Left cardiac atrium (tissue), 4 donors: ENCODE measurements at regions of chr11 and their contacts with region 1.

Region 1: GRCh38 chr11:7577291-7578190 is 63.7 kb downstream of the PPFIBP2 start:
- DNase-seq: peak; percentile 37
- ATAC-seq: peak; percentile 56 to 62

Region 2: GRCh38 chr11:7442588-7443215 is 134.8 kb before region 1 on chr11:
- intact Hi-C with region 1: no loop called
- DNase-seq: peak; percentile 67
- ATAC-seq: peak in 1 of 2 donors; percentile 70

Region 3: DNA sequence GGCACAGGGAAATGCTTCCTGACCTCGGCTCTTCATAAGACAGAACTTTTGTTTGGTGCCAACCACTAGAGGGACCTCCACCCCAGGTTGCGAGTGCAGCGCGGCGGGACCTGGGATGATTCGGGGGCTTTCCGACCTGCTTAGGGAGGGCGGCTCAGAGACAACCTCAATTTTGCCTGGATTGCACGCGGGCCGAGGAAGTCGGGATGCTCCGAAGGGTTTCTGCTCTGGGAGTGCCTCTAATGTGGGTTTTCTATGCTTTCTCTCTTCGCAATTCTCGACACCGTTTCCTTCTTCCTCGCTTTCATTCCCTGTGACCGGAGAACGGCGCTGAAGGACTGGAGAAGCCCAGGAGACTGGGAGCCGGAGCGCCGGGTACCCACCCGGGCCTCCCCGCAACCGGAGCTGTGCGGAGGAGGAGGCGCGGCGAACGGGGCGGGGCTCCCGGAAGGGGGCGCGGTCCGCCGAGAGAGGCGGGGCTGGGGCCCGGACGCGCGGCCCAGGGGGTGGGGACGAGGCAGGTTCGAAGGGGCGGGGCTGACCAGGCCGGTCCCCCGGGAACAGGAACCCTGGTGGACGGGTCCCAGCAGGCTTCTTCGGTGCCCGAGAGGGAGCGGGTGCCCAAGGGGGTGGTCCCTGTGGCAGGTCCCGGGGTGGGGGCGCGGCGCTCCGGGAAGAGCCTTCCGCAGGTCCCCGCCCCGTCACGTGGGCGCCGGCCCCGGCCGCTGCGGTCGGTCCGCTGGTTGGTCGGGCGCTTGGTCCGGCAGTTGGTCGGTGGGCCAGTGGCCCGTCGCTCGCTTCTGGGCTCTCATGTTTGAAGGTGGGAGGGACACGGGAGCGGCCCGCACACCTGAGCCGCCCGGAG is 64.1 kb before region 1 on chr11 and contains the start of gene PPFIBP2:
- intact Hi-C with region 1: loop called in 1 of 2 experiments (anchors 5 kb)
- DNase-seq: peak; percentile 84
- ATAC-seq: peak; percentile 90 to 95
- total RNA-seq, gene PPFIBP2: 16.3 to 25.5 TPM

Region 4: GRCh38 chr11:7524462-7525235 is 52.9 kb before region 1 on chr11:
- intact Hi-C with region 1: no loop called
- DNase-seq: no peak
- ATAC-seq: no peak

Region 5: DNA sequence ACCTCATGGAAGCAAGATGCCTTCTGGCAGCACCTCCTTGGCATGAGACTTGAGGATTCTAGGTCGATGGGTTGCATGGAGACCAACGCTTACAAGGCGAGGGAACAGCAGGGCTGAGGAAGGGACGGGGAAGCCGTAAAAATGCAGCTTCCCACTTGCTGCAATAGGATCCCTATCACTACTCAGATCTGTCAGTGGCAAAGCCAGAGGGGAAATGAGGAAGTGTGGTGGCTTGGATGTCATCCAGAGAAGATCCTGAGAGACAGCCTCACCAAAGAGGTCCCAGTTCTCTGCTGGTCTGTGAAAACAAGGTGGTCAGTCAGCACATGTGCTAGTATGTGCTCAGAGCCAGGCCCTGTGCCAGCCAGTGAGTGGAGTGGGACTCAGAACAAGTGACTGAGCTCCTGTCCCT is 73.6 kb after region 1 on chr11:
- intact Hi-C with region 1: loop called (anchors 5 kb)
- DNase-seq: no peak
- ATAC-seq: peak in 1 of 2 donors; percentile 25